ENCODE measurements at regions of chr5 and their contacts with region 1.

Region 1: DNA sequence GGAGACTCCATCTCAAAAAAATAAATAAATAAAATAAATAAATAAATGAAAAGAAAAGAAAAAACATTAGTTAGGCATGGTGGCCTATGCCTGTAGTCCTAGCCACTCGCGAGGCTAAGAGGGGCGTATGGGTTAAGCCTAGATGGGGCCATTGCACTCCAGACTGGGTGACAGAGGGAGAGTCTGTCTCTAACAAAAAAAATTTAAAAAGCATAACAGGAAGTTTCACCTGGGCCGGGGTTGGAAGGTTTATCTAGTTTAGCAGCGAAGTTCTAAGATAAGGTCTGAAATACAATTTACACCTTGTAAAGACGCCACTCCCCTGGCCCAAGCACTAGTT is 18.0 kb downstream of the ZMAT2 start:
- DNase-seq: no peak
- ATAC-seq: peak; percentile 42
- H3K4me3 ChIP-seq: peak overlapping the region; percentile 42
- H3K27ac ChIP-seq: peak overlapping the region; percentile 95
- H3K4me1 ChIP-seq: peaks cover 0 to 2% of the 10 kb centered on the region in 2 experiments; a peak in 2 of 5 replicates
- H3K27me3 ChIP-seq: no peaks in the 10 kb centered on the region
- CTCF ChIP-seq: no peak
- EP300 ChIP-seq: no peak
- POLR2A ChIP-seq: no peak
- RAD21 ChIP-seq: no peak

Region 2: GRCh38 chr5:140372971-140373487 is 345.2 kb before region 1 on chr5:
- CTCF ChIA-PET with region 1: no interaction called
- POLR2A ChIA-PET with region 1: interaction called, 4 read pairs
- in situ Hi-C with region 1: loop called (anchors 5 kb)
- intact Hi-C with region 1: loop called (anchors 2 kb)
- DNase-seq: peak; percentile 62 to 78 (median 75)
- ATAC-seq: peak; percentile 87
- H3K4me3 ChIP-seq: no peak overlapping the region
- H3K27ac ChIP-seq: no peak overlapping the region
- H3K4me1 ChIP-seq: peaks cover 6 to 7% of the 10 kb centered on the region in 2 experiments; a peak in 2 of 5 replicates
- H3K27me3 ChIP-seq: no peaks in the 10 kb centered on the region
- CTCF ChIP-seq: peak; percentile 68 to 87 (median 80)
- EP300 ChIP-seq: no peak
- POLR2A ChIP-seq: no peak
- RAD21 ChIP-seq: peak; percentile 53 to 79

Region 3: DNA sequence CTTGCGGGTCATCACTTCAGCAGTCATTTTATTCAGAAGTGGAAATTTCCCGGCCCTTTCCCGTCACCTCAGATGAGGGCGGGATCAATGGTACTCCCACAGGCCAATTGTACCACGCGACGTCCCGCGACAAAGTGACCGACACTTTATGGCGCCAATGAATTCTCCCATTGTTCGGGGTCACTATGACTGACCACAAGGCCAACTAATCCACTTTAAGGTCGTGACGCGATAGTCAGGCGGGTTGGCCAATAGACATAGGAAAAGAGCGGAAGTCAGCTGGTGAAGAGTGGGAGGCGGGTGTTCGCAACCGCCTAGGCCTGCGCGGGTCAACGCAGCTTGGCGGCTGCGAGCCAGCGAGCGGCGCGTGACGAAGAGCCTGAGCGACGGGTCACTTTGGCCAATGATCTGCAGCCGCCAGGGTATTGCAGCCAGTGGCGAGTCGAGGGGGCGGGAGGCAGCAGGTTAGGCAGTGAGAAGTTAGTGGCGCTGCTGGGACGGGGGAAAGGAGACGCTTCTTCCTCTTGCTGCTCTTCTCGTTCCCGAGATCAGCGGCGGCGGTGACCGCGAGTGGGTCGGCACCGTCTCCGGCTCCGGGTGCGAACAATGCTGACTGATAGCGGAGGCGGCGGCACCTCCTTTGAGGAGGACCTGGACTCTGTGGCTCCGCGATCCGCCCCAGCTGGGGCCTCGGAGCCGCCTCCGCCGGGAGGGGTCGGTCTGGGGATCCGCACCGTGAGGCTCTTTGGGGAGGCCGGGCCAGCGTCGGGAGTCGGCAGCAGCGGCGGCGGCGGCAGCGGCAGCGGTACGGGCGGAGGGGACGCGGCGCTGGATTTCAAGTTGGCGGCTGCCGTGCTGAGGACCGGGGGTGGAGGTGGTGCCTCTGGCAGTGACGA is 316.6 kb before region 1 on chr5 and contains the start of gene ANKHD1:
- CTCF ChIA-PET with region 1: no interaction called
- POLR2A ChIA-PET with region 1: interaction called, 5 read pairs
- in situ Hi-C with region 1: no loop called
- intact Hi-C with region 1: loop called (anchors 2 kb)
- DNase-seq: peak; percentile 91 to 100 (median 94)
- ATAC-seq: peak; percentile 83
- H3K4me3 ChIP-seq: peak within 1 kb of the TSS; percentile 100
- H3K27ac ChIP-seq: peak within 1 kb of the TSS; percentile 97
- H3K4me1 ChIP-seq: peaks cover 12 to 18% of the 10 kb centered on the region in 2 experiments; a peak in 4 of 5 replicates
- H3K27me3 ChIP-seq: no peaks in the 10 kb centered on the region
- CTCF ChIP-seq: peak in 1 of 3 experiments; percentile 15; a peak in 1 of 6 replicates
- EP300 ChIP-seq: no peak
- POLR2A ChIP-seq: peak; percentile 90
- RAD21 ChIP-seq: no peak; a peak in 1 of 4 replicates
- polyA plus RNA-seq, gene ANKHD1: 38.9 to 39.0 TPM

Region 4: DNA sequence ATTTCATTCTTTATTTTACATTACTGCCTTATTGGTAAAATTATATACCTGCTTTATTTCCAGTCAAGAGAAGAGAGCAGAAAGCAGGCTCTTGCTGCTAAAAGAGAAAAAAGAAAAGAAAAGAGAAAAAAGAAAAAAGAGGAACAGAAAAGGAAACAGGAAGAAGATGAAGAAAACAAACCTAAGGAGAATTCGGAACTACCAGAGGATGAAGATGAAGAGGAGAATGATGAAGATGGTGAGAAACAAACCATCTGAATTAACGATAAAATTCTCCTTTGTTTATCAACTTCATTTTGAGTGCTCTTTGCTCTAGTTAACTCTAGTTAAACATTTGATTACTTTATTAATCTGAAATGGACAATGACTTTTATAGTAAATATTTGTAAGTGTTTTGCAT is 194.2 kb before region 1 on chr5:
- CTCF ChIA-PET with region 1: no interaction called
- POLR2A ChIA-PET with region 1: no interaction called
- in situ Hi-C with region 1: no loop called
- intact Hi-C with region 1: no loop called
- DNase-seq: no peak
- ATAC-seq: no peak
- H3K4me3 ChIP-seq: no peak overlapping the region
- H3K27ac ChIP-seq: no peak overlapping the region
- H3K4me1 ChIP-seq: no peaks in the 10 kb centered on the region
- H3K27me3 ChIP-seq: no peaks in the 10 kb centered on the region
- CTCF ChIP-seq: no peak
- EP300 ChIP-seq: no peak
- POLR2A ChIP-seq: no peak
- RAD21 ChIP-seq: no peak

Region 5: GRCh38 chr5:140557136-140557805 is 160.9 kb before region 1 on chr5 and contains the start of gene SRA1:
- CTCF ChIA-PET with region 1: no interaction called
- POLR2A ChIA-PET with region 1: no interaction called
- in situ Hi-C with region 1: loop called (anchors 5 kb)
- intact Hi-C with region 1: loop called (anchors 5 kb)
- DNase-seq: peak; percentile 83 to 95 (median 91)
- ATAC-seq: peak; percentile 94
- H3K4me3 ChIP-seq: peak within 1 kb of the TSS; percentile 77
- H3K27ac ChIP-seq: peak within 1 kb of the TSS; percentile 86
- H3K4me1 ChIP-seq: peaks cover 23 to 27% of the 10 kb centered on the region in 2 experiments
- H3K27me3 ChIP-seq: no peaks in the 10 kb centered on the region
- CTCF ChIP-seq: peak in 1 of 3 experiments; percentile 13; a peak in 1 of 6 replicates
- EP300 ChIP-seq: no peak
- POLR2A ChIP-seq: peak; percentile 96
- RAD21 ChIP-seq: no peak
- polyA plus RNA-seq, gene SRA1: 24.1 to 33.6 TPM

Region 6: DNA sequence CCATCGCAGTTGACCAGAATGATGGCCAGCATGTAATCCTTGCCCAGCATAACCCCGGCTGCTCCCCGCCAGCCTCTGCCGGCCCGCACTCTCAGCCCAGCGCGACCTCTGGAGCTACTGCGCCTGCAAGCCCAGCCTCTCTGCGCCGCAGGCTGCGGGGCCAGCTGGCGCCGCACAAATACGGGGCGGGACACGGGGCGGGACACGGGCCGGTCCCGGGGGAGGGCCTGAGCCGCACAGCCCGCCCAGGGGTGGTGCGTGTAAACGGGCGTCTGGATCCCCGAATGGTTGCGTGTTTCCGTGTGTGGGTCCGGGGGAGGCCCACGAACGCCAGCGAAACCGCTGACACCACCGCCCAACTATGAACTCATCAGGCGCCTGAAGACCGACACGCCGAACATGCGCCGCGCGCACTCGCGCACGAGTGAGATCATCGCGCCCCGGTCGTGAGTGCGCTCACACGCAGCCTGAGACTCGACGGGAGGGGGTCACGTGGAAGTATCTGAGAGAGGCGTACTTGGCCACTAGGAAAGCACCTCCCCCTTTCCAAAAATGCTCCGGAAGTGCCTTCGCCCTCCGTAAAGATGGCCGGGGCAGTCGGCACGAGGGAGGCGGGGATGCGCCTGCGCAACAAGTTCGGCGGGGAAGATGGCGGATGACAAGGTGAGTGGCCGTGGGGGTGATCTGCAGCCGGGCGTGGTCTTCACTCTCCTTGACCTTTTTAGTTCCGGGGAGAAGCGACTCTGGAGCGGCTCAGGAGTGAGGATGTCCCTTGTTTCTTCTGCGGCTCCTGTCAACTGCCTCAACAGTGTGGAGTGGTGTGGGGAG is 153.8 kb before region 1 on chr5 and contains the starts of genes APBB3 and SLC35A4:
- CTCF ChIA-PET with region 1: no interaction called
- POLR2A ChIA-PET with region 1: interaction called, 4 read pairs
- in situ Hi-C with region 1: loop called (anchors 5 kb)
- intact Hi-C with region 1: loop called (anchors 5 kb)
- DNase-seq: peak; percentile 92 to 99 (median 94)
- ATAC-seq: peak; percentile 94
- H3K4me3 ChIP-seq: peak within 1 kb of the TSS; percentile 75
- H3K27ac ChIP-seq: peak within 1 kb of the TSS; percentile 98
- H3K4me1 ChIP-seq: peaks cover 26 to 40% of the 10 kb centered on the region in 2 experiments
- H3K27me3 ChIP-seq: no peaks in the 10 kb centered on the region
- CTCF ChIP-seq: 0 out of 6 replicates have a peak, but pooled peaks of 1 of the 3 experiments have one; percentile 12
- EP300 ChIP-seq: peak; percentile 58
- POLR2A ChIP-seq: peak; percentile 93
- RAD21 ChIP-seq: 0 out of 4 replicates have a peak, but pooled peaks of 1 of the 2 experiments have one; percentile 12
- polyA plus RNA-seq, gene APBB3: 0.17 to 0.67 TPM
- polyA plus RNA-seq, gene SLC35A4: 30.0 to 42.5 TPM

Region 7: DNA sequence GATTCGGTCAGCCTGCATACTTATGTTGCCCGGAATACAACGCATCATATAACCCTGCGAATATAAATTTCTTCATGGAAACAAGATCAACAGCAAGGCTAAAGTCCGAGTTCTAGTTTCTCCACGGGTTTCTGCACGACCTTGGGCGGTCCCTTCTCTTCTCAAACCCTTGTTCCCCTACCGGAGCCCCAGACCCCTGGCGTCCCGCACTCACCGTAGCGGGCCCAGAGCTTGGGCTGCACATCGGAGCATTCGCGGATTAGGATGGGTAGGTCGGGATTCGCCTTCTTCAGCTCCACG is 71.2 kb before region 1 on chr5:
- CTCF ChIA-PET with region 1: no interaction called
- POLR2A ChIA-PET with region 1: interaction called, 14 read pairs
- in situ Hi-C with region 1: no loop called
- intact Hi-C with region 1: loop called (anchors 2 kb)
- DNase-seq: no peak
- ATAC-seq: peak; percentile 52
- H3K4me3 ChIP-seq: peak overlapping the region; percentile 96
- H3K27ac ChIP-seq: peak overlapping the region; percentile 95
- H3K4me1 ChIP-seq: peaks cover 4 to 10% of the 10 kb centered on the region in 2 experiments; a peak in 3 of 5 replicates
- H3K27me3 ChIP-seq: no peaks in the 10 kb centered on the region; a peak in 1 of 5 replicates
- CTCF ChIP-seq: no peak
- EP300 ChIP-seq: no peak
- POLR2A ChIP-seq: no peak
- RAD21 ChIP-seq: no peak

Region 8: GRCh38 chr5:140664359-140665119 is 53.7 kb before region 1 on chr5 and contains the start of gene WDR55:
- CTCF ChIA-PET with region 1: no interaction called
- POLR2A ChIA-PET with region 1: interaction called, 4 read pairs
- in situ Hi-C with region 1: no loop called
- intact Hi-C with region 1: loop called (anchors 2 kb)
- DNase-seq: peak; percentile 92 to 98 (median 94)
- ATAC-seq: peak; percentile 98
- H3K4me3 ChIP-seq: peak within 1 kb of the TSS; percentile 92
- H3K27ac ChIP-seq: peak within 1 kb of the TSS; percentile 91
- H3K4me1 ChIP-seq: peaks cover 10 to 14% of the 10 kb centered on the region in 2 experiments; a peak in 4 of 5 replicates
- H3K27me3 ChIP-seq: no peaks in the 10 kb centered on the region
- CTCF ChIP-seq: 0 out of 6 replicates have a peak, but pooled peaks of 1 of the 3 experiments have one; percentile 5
- EP300 ChIP-seq: 0 out of 2 replicates have a peak, but pooled peaks have one; percentile 3
- POLR2A ChIP-seq: peak; percentile 92
- RAD21 ChIP-seq: peak; percentile 6 to 9; a peak in 1 of 4 replicates
- polyA plus RNA-seq, gene WDR55: 5.2 to 6.6 TPM